Activated CD4-positive, alpha-beta memory T cell treated with anti-CD3 and anti-CD28 coated beads for 36 hours (primary cell): ENCODE measurements at regions of chr17 and their contacts with region 1.

Region 1: DNA sequence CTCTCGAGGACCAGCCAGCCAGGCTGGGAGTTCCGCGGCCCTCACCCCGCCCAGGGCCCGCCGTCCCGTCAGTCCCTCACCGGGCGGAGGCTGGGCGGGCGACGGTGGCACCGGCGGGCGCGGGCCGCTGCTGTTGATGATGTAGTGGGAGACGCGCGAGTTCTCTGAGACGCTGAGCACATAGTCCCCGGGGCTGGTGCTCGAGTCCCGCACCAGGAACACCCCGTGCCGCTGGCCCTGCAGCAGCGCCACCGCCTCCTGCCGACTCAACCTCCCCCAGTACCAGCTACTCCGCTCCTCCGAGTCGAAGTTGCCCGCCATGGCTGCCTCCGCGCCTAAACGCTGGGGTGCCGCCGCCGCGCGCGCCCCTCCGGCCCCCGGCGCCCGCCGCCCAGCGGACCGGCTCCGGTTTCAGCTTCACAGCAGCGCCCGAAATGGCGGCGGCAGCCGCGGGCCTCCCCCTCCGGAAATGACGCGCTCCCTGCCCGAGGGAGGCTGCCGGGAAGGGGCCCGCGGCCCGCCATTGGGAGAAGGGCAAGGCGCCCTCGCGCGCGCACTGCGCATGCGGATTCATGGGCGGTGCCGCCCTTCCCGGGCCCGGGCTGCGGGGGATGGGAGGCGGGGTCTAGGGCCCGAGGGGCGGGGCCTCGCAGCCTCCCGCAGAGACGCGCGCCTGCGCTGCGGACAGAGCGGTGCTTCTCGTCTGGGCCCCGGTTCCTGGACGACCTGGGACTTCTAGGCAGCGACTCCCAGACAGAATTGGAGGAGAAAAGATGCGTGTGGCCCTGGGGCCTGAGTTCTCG is at the start of gene CRK:
- DNase-seq: peak; percentile 99
- H3K4me3 Mint-ChIP-seq: peak within 1 kb of the TSS; percentile 85
- H3K27ac Mint-ChIP-seq: peak within 1 kb of the TSS; percentile 88
- H3K4me1 Mint-ChIP-seq: peaks cover 52% of the 10 kb centered on the region
- H3K27me3 Mint-ChIP-seq: peaks cover 5% of the 10 kb centered on the region
- total RNA-seq, gene CRK: 14.1 to 17.8 TPM

Region 2: DNA sequence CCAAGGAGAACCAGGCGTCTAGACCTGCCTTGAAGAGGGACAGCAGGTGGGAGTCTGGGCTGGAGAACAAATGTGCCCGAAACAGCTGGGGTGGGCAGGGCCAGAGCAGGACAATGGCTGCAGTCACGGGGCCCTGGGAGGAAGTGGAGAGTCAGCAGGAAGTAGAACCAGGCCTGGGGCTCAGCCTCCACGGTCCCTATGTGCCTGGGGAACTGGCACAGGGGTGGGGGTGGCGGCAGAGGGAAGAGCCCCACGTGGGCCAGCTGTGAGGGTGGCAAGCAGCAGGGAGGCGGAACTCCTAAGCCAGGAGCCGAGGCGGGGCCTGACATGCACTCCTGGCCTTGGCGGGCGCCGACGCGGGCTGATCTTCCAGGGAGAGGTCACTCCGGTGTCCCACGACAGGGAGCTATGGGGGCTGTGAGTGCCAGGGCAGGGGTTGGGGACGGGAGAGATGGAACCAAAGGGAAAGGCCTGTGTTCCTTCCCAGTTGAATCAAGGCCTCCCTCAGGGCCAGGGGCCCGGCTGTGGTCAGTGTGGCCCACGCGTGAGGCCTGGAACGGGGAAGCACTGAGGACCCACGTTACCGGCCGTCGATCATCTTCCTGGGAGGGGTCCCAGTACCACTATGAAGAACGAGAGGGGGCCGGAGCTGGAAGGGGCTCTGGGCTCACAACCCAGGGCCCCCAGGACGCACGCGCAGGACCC is 416.3 kb before region 1 on chr17:
- CTCF ChIA-PET with region 1: no interaction called
- POLR2A ChIA-PET with region 1: no interaction called
- intact Hi-C with region 1: no loop called
- DNase-seq: no peak
- H3K4me3 Mint-ChIP-seq: no peak overlapping the region
- H3K27ac Mint-ChIP-seq: no peak overlapping the region
- H3K4me1 Mint-ChIP-seq: no peaks in the 10 kb centered on the region
- H3K27me3 Mint-ChIP-seq: no peaks in the 10 kb centered on the region

Region 3: DNA sequence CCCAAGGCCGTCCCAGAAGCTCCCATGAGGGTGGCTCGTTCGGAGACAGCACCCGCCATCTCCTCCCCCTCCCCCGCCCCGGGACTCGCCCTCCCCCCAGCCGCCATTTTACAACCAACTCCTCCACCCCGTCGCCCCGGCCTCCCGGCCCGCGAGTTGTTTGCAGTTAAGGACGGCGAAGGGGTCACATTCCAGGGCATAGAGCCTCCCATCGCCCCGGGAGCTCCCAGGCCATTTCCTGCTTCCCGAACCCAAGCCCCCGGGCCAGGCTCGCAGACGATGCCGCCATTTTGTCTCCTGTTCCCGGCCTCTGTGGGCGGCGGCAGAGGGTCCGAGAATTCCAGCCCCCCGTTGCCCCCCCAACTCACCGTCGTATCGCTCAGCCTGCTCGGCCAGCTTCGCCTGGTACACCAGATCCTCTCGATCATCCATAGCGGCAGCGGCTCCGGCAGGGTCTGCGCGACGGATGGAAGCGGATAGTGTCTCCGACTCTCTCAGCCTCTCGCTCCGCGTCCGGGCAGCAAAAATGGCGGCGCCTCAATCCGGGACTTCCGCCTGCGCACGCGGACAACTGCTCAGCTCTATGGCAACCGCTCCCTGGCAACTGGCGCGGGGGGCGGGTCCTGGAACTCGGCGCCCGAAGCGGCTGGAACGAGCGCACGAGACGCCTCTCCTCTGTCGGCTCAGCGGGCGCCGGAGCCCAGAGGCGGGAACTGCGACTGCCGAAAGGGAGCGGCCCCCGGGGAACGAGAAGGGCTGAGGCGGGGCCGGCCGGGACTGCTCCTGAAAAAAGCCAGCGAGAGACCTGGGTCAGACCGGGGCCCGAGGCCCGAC is 56.1 kb before region 1 on chr17 and contains the start of gene YWHAE:
- CTCF ChIA-PET with region 1: interaction called, 3 read pairs
- POLR2A ChIA-PET with region 1: interaction called, 4 read pairs
- intact Hi-C with region 1: loop called (anchors 2 kb)
- DNase-seq: peak; percentile 98
- H3K4me3 Mint-ChIP-seq: peak within 1 kb of the TSS; percentile 99
- H3K27ac Mint-ChIP-seq: peak within 1 kb of the TSS; percentile 100
- H3K4me1 Mint-ChIP-seq: peaks cover 26% of the 10 kb centered on the region
- H3K27me3 Mint-ChIP-seq: no peaks in the 10 kb centered on the region
- total RNA-seq, gene YWHAE: 505 to 509 TPM

Region 4: GRCh38 chr17:1484676-1485421 is 28.9 kb after region 1 on chr17:
- CTCF ChIA-PET with region 1: no interaction called
- POLR2A ChIA-PET with region 1: interaction called, 7 read pairs
- intact Hi-C with region 1: loop called (anchors 1 kb)
- DNase-seq: peak; percentile 50
- H3K4me3 Mint-ChIP-seq: peak overlapping the region; percentile 72
- H3K27ac Mint-ChIP-seq: peak overlapping the region; percentile 64
- H3K4me1 Mint-ChIP-seq: peaks cover 25% of the 10 kb centered on the region
- H3K27me3 Mint-ChIP-seq: no peaks in the 10 kb centered on the region